CD4-positive, alpha-beta T cell (primary cell): ENCODE measurements at regions of chr10 and their contacts with region 1.

Region 1: GRCh38 chr10:86960003-86960862 is 1.8 kb downstream of the SNCG start:
- DNase-seq: peak in 5 of 14 experiments; percentile 32 to 77 (median 61)
- ATAC-seq: peak; percentile 91
- H3K4me3 ChIP-seq: no peak overlapping the region
- H3K4me3 Mint-ChIP-seq: no peak overlapping the region
- H3K27ac ChIP-seq: no peak overlapping the region
- H3K27ac Mint-ChIP-seq: no peak overlapping the region
- H3K4me1 ChIP-seq: peaks cover 41% of the 10 kb centered on the region
- H3K4me1 Mint-ChIP-seq: peaks cover 4% of the 10 kb centered on the region
- H3K27me3 ChIP-seq: no peaks in the 10 kb centered on the region
- H3K27me3 Mint-ChIP-seq: peaks cover 3% of the 10 kb centered on the region
- CTCF ChIP-seq: no peak

Region 2: GRCh38 chr10:86688398-86688921 is 271.8 kb before region 1 on chr10:
- CTCF ChIA-PET with region 1: no interaction called
- POLR2A ChIA-PET with region 1: no interaction called
- intact Hi-C with region 1: loop called in 1 of 2 experiments (anchors 10 kb)
- DNase-seq: peak; percentile 19 to 78 (median 36)
- ATAC-seq: peak; percentile 94
- H3K4me3 ChIP-seq: no peak overlapping the region
- H3K4me3 Mint-ChIP-seq: no peak overlapping the region
- H3K27ac ChIP-seq: no peak overlapping the region
- H3K27ac Mint-ChIP-seq: no peak overlapping the region
- H3K4me1 ChIP-seq: peaks cover 6% of the 10 kb centered on the region
- H3K4me1 Mint-ChIP-seq: peaks cover 5% of the 10 kb centered on the region
- H3K27me3 ChIP-seq: peaks cover 0 to 4% of the 10 kb centered on the region in 2 experiments
- H3K27me3 Mint-ChIP-seq: peaks cover 10% of the 10 kb centered on the region
- CTCF ChIP-seq: peak; percentile 81

Region 3: DNA sequence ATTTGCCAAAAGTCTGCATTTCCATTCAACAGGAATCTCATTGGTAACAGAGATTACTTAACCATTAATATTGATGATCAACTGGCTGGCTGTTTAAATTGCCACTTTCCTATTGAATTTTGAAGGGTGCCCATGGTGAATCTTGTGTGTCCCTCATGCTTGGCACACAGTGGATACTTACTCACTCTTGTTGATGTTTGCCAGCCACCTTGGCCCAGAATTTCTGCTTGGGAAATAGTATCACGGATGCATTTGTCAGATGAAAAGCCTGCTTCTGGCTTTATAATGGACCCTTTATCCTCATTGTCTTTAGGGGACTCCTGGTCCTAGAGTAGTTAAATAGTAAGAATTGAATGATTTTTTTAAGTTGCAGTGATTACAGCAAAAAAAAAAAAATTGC is 54.8 kb before region 1 on chr10:
- CTCF ChIA-PET with region 1: no interaction called
- POLR2A ChIA-PET with region 1: no interaction called
- intact Hi-C with region 1: no loop called
- DNase-seq: no peak
- ATAC-seq: no peak
- H3K4me3 ChIP-seq: no peak overlapping the region
- H3K4me3 Mint-ChIP-seq: no peak overlapping the region
- H3K27ac ChIP-seq: no peak overlapping the region
- H3K27ac Mint-ChIP-seq: no peak overlapping the region
- H3K4me1 ChIP-seq: no peaks in the 10 kb centered on the region
- H3K4me1 Mint-ChIP-seq: no peaks in the 10 kb centered on the region
- H3K27me3 ChIP-seq: no peaks in the 10 kb centered on the region
- H3K27me3 Mint-ChIP-seq: no peaks in the 10 kb centered on the region
- CTCF ChIP-seq: no peak